ENCODE measurements at regions of chr1 and their contacts with region 1.

Region 1: DNA sequence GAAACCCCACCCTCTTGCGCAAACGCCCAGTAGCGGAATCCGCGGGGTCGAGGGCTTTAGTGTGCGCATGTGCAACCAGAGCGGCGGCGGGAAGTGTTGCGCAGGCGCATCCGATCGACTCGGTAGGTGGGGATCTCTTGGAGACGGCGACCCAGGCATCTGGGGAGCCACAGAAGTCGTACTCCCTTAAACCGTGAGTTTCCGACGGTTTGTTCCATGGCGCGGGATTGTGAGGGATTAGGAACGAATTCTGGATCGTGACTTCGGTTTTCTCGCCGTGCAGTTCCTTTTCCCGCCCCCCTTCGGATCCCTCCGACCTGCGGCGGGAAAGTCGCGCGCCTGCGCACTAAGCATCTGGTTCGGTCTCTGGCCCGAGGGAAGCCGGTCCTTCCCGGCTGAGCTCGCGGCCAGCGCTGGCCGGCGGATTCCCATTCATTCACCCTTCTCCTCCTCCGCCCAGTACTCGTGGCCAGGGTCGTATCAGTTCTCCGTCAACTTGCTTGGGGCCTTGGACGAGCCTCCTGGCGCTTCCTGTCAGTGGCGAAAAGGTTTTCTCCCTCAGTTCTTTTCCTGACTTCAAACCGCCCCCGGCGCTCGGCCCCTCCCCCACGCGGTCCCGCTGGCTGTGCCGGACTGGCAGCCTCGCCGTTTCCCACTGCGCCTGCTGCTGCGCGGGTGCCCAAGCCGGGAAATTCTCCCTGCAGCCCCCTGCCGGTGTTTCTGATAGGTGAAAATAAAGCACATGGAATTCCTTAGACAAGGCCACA is at the start of gene CDC7:
- DNase-seq: peak; percentile 92
- ATAC-seq: peak; percentile 77
- H3K4me3 Mint-ChIP-seq: no peak within 1 kb of the TSS
- H3K27ac Mint-ChIP-seq: no peak within 1 kb of the TSS; the same call in 1 of the 2 replicates
- H3K4me1 Mint-ChIP-seq: peaks cover 30% of the 10 kb centered on the region
- H3K27me3 Mint-ChIP-seq: no peaks in the 10 kb centered on the region
- CTCF ChIP-seq: no peak
- total RNA-seq, gene CDC7: 41.3 to 49.9 TPM (median 46.9 TPM) in 3 replicates

Region 2: GRCh38 chr1:91404151-91405012 is 96.6 kb before region 1 on chr1 and contains the start of gene HFM1:
- CTCF ChIA-PET with region 1: interaction called, 10 read pairs
- POLR2A ChIA-PET with region 1: interaction called, 18 read pairs
- DNase-seq: peak; percentile 85
- ATAC-seq: peak; percentile 96
- H3K4me3 Mint-ChIP-seq: peak within 1 kb of the TSS; percentile 92
- H3K27ac Mint-ChIP-seq: peak within 1 kb of the TSS; percentile 98
- H3K4me1 Mint-ChIP-seq: peaks cover 18% of the 10 kb centered on the region
- H3K27me3 Mint-ChIP-seq: no peaks in the 10 kb centered on the region
- CTCF ChIP-seq: no peak
- total RNA-seq, gene HFM1: 1.7 to 3.8 TPM (median 3.4 TPM) in 3 replicates

Region 3: GRCh38 chr1:91513160-91513559 is 12.2 kb after region 1 on chr1:
- CTCF ChIA-PET with region 1: no interaction called
- POLR2A ChIA-PET with region 1: no interaction called
- DNase-seq: no peak
- ATAC-seq: no peak
- H3K4me3 Mint-ChIP-seq: no peak overlapping the region
- H3K27ac Mint-ChIP-seq: no peak overlapping the region
- H3K4me1 Mint-ChIP-seq: no peaks in the 10 kb centered on the region
- H3K27me3 Mint-ChIP-seq: no peaks in the 10 kb centered on the region
- CTCF ChIP-seq: no peak

Measured in WTC11 (cell line).